ENCODE measurements at regions of chr4 and their contacts with region 1.

Region 1: GRCh38 chr4:3037957-3038461 is 36.3 kb downstream of the HTT-AS start:
- DNase-seq: no peak
- ATAC-seq: no peak
- H3K4me3 ChIP-seq: peak overlapping the region in 2 of 3 experiments; percentile 49 to 54; a peak in 4 of 6 replicates
- H3K27ac ChIP-seq: no peak overlapping the region
- H3K4me1 ChIP-seq: peaks cover 74% of the 10 kb centered on the region
- H3K27me3 ChIP-seq: peaks cover 3 to 31% of the 10 kb centered on the region in 2 experiments; a peak in 3 of 5 replicates
- CTCF ChIP-seq: no peak
- EP300 ChIP-seq: no peak
- POLR2A ChIP-seq: no peak
- RAD21 ChIP-seq: no peak

Region 2: DNA sequence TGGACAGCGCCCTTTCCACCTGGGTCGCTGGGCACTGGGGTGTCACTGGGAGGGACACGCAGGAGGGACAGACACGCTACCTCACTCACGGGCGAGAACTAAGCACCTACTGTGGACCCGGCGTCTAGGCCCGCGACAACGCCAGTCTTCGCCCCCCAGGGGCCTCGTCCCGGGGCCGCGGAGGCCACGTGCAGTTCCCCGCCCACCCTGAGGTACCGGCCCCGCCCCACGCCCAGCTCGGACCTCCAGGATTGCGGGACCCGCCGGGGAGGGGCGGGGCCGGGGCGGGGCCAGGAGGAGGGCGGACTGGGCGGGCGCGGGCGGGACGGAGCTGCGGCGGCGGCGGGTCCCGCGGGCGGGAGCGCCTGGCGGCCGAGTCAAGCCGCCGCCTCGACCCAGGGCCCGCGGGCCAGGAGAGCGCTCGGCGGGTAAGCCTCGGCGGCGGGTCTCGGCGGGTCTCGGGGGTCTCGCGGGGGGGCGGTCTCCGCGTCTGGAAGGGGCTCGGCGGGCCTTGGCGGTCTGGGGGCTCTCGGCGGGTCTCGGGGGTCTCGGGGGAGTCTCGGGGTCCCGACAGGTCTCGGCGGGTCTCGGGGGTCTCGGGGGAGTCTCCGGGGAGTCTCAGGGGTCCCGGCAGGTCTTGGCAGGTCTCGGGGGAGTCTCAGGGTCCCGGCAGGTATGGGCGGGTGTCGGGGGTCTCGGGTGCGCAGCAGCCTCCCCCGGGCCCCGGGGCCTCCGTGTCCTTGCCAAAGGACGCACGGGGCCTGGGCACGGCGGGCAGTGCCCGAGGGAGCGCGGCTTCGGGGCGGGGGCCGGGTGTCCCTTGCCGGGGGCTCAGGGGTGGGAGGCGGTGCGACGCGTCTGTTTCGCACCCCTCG is 245.1 kb before region 1 on chr4 and contains the start of gene SH3BP2:
- CTCF ChIA-PET with region 1: no interaction called
- POLR2A ChIA-PET with region 1: no interaction called
- in situ Hi-C with region 1: no loop called
- intact Hi-C with region 1: no loop called
- DNase-seq: peak; percentile 63
- ATAC-seq: peak; percentile 41
- H3K4me3 ChIP-seq: peak within 1 kb of the TSS; percentile 66 to 75 (median 75)
- H3K27ac ChIP-seq: peak within 1 kb of the TSS; percentile 67
- H3K4me1 ChIP-seq: peaks cover 93% of the 10 kb centered on the region
- H3K27me3 ChIP-seq: no peaks in the 10 kb centered on the region
- CTCF ChIP-seq: no peak
- EP300 ChIP-seq: no peak
- POLR2A ChIP-seq: no peak
- RAD21 ChIP-seq: no peak
- total RNA-seq, gene SH3BP2: 7.0 and 16.9 TPM in 2 replicates

Region 3: DNA sequence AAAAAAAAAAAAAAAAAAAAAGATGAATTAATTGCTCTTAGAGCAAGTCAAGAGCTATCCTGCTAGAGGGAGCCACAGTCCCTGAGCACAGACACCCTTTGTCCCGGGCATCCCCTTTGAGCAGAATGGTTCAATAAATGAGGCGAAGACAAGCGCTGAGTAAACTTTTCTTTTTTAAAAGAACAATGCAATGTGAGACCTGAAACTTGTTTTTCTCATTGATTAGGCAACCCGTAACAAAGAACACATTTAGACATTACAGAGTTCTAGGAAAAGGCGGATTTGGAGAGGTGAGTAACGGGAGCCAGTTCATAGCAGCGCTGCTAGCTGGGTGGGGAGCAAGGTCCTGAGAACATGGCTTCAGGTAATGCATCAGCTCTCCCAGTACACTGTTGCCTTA is 28.6 kb before region 1 on chr4:
- CTCF ChIA-PET with region 1: interaction called, 8 read pairs
- POLR2A ChIA-PET with region 1: interaction called, 7 read pairs
- in situ Hi-C with region 1: no loop called
- intact Hi-C with region 1: loop called (anchors 1 kb)
- DNase-seq: peak; percentile 84
- ATAC-seq: peak; percentile 93
- H3K4me3 ChIP-seq: no peak overlapping the region
- H3K27ac ChIP-seq: no peak overlapping the region
- H3K4me1 ChIP-seq: peaks cover 29% of the 10 kb centered on the region
- H3K27me3 ChIP-seq: peaks cover 2 to 15% of the 10 kb centered on the region in 2 experiments; a peak in 4 of 5 replicates
- CTCF ChIP-seq: peak; percentile 61
- EP300 ChIP-seq: no peak
- POLR2A ChIP-seq: no peak
- RAD21 ChIP-seq: no peak

Region 4: GRCh38 chr4:4541661-4542570 is 1503.9 kb after region 1 on chr4 and contains the start of gene STX18:
- CTCF ChIA-PET with region 1: no interaction called
- POLR2A ChIA-PET with region 1: no interaction called
- in situ Hi-C with region 1: no loop called
- intact Hi-C with region 1: no loop called
- DNase-seq: peak; percentile 73
- ATAC-seq: peak; percentile 96
- H3K4me3 ChIP-seq: peak within 1 kb of the TSS; percentile 86 to 94 (median 86)
- H3K27ac ChIP-seq: peak within 1 kb of the TSS; percentile 91
- H3K4me1 ChIP-seq: peaks cover 54% of the 10 kb centered on the region
- H3K27me3 ChIP-seq: no peaks in the 10 kb centered on the region
- CTCF ChIP-seq: peak; percentile 38; the same call in 1 of the 2 replicates
- EP300 ChIP-seq: peak; percentile 58 to 79; a peak in 3 of 4 replicates
- POLR2A ChIP-seq: peak; percentile 70 to 81
- RAD21 ChIP-seq: peak; percentile 74
- total RNA-seq, gene STX18: 37.1 and 41.2 TPM in 2 replicates